CD8-positive, alpha-beta T cell (primary cell): ENCODE measurements at regions of chr18 and their contacts with region 1.

Region 1: GRCh38 chr18:21191596-21192307 is 50.3 kb upstream of the GREB1L start:
- DNase-seq: peak in 1 of 9 experiments; percentile 3
- ATAC-seq: no peak
- H3K4me3 ChIP-seq: no peak overlapping the region
- H3K4me3 Mint-ChIP-seq: no peak overlapping the region
- H3K27ac ChIP-seq: no peak overlapping the region
- H3K27ac Mint-ChIP-seq: no peak overlapping the region
- H3K4me1 ChIP-seq: no peaks in the 10 kb centered on the region
- H3K4me1 Mint-ChIP-seq: no peaks in the 10 kb centered on the region
- H3K27me3 ChIP-seq: no peaks in the 10 kb centered on the region
- H3K27me3 Mint-ChIP-seq: peaks cover 30% of the 10 kb centered on the region
- CTCF ChIP-seq: no peak

Region 2: DNA sequence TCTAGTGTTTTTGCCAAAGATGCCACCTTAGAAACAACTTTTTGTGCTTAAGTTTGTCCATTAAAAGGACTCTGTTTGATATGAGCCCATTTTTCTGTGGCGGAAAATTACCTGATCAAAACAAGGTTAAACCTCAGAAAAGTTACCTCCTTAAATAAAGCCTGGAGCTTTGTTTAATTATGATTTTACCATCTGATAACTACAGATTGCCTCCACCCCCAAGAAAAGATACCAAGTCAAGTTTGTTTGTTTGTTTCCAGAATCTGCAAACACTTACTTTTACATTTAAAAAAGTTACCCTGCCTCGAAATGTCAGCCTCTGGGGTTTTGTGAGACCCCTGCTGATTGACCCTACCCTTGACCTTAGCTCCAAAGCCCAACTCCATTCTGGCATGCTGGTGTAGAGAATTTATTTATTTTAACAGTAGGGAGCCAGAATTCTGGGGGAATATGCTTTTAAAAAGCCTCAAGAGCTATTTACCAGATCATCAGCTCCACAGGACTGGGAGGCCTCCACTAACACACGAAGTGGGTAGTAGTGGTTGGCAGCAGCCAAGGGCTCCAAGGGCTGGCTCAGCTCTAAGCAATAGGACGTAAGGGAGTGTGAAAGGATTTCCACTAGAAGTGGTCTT is 27.0 kb after region 1 on chr18:
- CTCF ChIA-PET with region 1: interaction called, 11 read pairs
- POLR2A ChIA-PET with region 1: interaction called, 3 read pairs
- intact Hi-C with region 1: no loop called
- DNase-seq: no peak
- ATAC-seq: no peak
- H3K4me3 ChIP-seq: no peak overlapping the region
- H3K4me3 Mint-ChIP-seq: no peak overlapping the region
- H3K27ac ChIP-seq: no peak overlapping the region
- H3K27ac Mint-ChIP-seq: no peak overlapping the region
- H3K4me1 ChIP-seq: no peaks in the 10 kb centered on the region
- H3K4me1 Mint-ChIP-seq: no peaks in the 10 kb centered on the region
- H3K27me3 ChIP-seq: no peaks in the 10 kb centered on the region
- H3K27me3 Mint-ChIP-seq: no peaks in the 10 kb centered on the region
- CTCF ChIP-seq: no peak

Region 3: DNA sequence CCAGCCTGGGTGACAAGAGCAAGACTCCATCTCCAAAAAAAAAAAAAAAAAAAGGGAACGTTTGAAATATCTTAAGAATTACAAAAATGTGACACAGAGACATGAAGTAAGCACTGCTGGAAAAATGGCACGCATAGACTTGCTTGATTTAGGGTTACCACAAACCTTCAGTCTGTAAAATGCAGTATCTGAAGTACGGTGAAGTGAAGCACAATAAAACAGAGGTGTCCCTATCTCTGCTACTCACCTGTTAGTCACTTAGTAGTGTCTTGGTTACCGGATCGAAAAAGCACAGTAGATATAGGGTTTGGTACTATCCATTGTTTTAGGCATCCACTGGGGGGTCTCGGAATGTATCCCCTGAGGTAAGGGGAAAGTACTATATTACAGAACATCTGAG is 38.7 kb after region 1 on chr18:
- CTCF ChIA-PET with region 1: no interaction called
- POLR2A ChIA-PET with region 1: no interaction called
- intact Hi-C with region 1: no loop called
- DNase-seq: no peak
- ATAC-seq: no peak
- H3K4me3 ChIP-seq: no peak overlapping the region
- H3K4me3 Mint-ChIP-seq: no peak overlapping the region
- H3K27ac ChIP-seq: no peak overlapping the region
- H3K27ac Mint-ChIP-seq: no peak overlapping the region
- H3K4me1 ChIP-seq: no peaks in the 10 kb centered on the region
- H3K4me1 Mint-ChIP-seq: no peaks in the 10 kb centered on the region
- H3K27me3 ChIP-seq: no peaks in the 10 kb centered on the region
- H3K27me3 Mint-ChIP-seq: peaks cover 9% of the 10 kb centered on the region
- CTCF ChIP-seq: no peak

Region 4: GRCh38 chr18:21851327-21851972 is 659.7 kb after region 1 on chr18:
- CTCF ChIA-PET with region 1: interaction called, 3 read pairs
- POLR2A ChIA-PET with region 1: no interaction called
- intact Hi-C with region 1: loop called in 1 of 2 experiments (anchors 2 kb)
- DNase-seq: peak in 2 of 9 experiments; percentile 4 to 25
- ATAC-seq: no peak
- H3K4me3 ChIP-seq: no peak overlapping the region
- H3K4me3 Mint-ChIP-seq: no peak overlapping the region
- H3K27ac ChIP-seq: no peak overlapping the region
- H3K27ac Mint-ChIP-seq: no peak overlapping the region
- H3K4me1 ChIP-seq: no peaks in the 10 kb centered on the region
- H3K4me1 Mint-ChIP-seq: peaks cover 7% of the 10 kb centered on the region
- H3K27me3 ChIP-seq: no peaks in the 10 kb centered on the region
- H3K27me3 Mint-ChIP-seq: no peaks in the 10 kb centered on the region
- CTCF ChIP-seq: peak; percentile 50

Region 5: GRCh38 chr18:21955757-21956652 is 764.3 kb after region 1 on chr18:
- CTCF ChIA-PET with region 1: interaction called, 28 read pairs
- POLR2A ChIA-PET with region 1: no interaction called
- intact Hi-C with region 1: loop called in 1 of 2 experiments (anchors 1 kb)
- DNase-seq: peak; percentile 51 to 87 (median 76)
- ATAC-seq: peak; percentile 78
- H3K4me3 ChIP-seq: no peak overlapping the region
- H3K4me3 Mint-ChIP-seq: no peak overlapping the region
- H3K27ac ChIP-seq: no peak overlapping the region
- H3K27ac Mint-ChIP-seq: no peak overlapping the region
- H3K4me1 ChIP-seq: no peaks in the 10 kb centered on the region
- H3K4me1 Mint-ChIP-seq: no peaks in the 10 kb centered on the region
- H3K27me3 ChIP-seq: no peaks in the 10 kb centered on the region
- H3K27me3 Mint-ChIP-seq: peaks cover 20% of the 10 kb centered on the region
- CTCF ChIP-seq: peak; percentile 91

Region 6: GRCh38 chr18:22703883-22704585 is 1512.3 kb after region 1 on chr18:
- CTCF ChIA-PET with region 1: no interaction called
- POLR2A ChIA-PET with region 1: no interaction called
- intact Hi-C with region 1: loop called in 1 of 2 experiments (anchors 2 kb)
- DNase-seq: peak in 3 of 9 experiments; percentile 8 to 58 (median 44)
- ATAC-seq: no peak
- H3K4me3 ChIP-seq: no peak overlapping the region
- H3K4me3 Mint-ChIP-seq: no peak overlapping the region
- H3K27ac ChIP-seq: no peak overlapping the region
- H3K27ac Mint-ChIP-seq: no peak overlapping the region
- H3K4me1 ChIP-seq: no peaks in the 10 kb centered on the region
- H3K4me1 Mint-ChIP-seq: no peaks in the 10 kb centered on the region
- H3K27me3 ChIP-seq: no peaks in the 10 kb centered on the region
- H3K27me3 Mint-ChIP-seq: peaks cover 8% of the 10 kb centered on the region
- CTCF ChIP-seq: peak; percentile 78